Activated CD8-positive, alpha-beta T cell treated with anti-CD3 and anti-CD28 coated beads for 36 hours (primary cell): ENCODE measurements at regions of chr2 and their contacts with region 1.

Region 1: GRCh38 chr2:7450188-7450832 is 533.1 kb downstream of the RNF144A start:
- DNase-seq: peak; percentile 92
- ATAC-seq: peak; percentile 73
- H3K4me3 Mint-ChIP-seq: peak overlapping the region; percentile 48
- H3K27ac Mint-ChIP-seq: peak overlapping the region; percentile 97
- H3K4me1 Mint-ChIP-seq: peaks cover 77% of the 10 kb centered on the region
- H3K27me3 Mint-ChIP-seq: no peaks in the 10 kb centered on the region
- CTCF ChIP-seq: no peak

Region 2: DNA sequence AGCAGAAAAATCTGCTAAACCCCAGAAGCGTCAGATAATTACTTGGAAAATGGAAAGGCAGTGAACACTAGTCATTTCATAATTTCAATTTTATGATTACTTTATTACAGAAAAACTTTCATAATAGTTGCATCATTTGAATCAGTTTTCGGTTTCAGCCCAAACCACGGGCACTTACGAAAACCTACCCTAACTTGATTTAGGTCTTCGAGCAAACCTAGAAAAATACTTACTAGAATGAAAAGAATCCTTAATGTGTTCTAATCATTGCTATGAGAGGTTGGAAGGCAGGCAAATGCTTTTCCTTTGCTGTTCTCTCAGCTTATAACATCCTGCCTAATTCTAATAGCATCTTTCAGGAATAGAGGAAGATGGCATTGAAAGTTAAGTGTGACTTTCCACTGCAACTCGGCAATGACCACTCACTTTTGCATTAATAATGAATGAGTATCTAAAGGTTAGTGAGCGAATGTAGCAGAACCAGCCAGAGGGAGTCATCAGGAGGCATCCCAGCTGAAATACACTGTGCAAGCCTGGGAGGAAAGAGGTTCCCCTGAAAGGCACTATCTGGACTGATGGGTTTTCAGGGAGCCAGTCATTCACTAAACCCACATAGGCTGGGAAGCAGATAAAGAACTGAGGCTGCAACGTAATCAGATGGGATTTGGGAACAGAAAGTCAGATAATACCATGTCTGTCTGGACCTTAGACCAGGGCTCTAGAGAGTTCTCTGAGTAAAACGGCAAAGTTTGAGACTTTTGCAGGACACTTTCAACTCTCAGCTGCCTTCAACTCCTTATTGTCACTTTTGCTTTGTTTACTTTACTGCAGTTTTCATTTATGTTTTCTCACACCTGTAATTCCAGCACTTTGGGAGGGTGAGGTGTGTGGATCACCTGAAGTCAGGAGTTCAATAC is 12.3 kb before region 1 on chr2:
- CTCF ChIA-PET with region 1: interaction called, 6 read pairs
- POLR2A ChIA-PET with region 1: interaction called, 128 read pairs
- intact Hi-C with region 1: loop called (anchors 2 kb)
- DNase-seq: peak; percentile 77
- ATAC-seq: peak; percentile 44
- H3K4me3 Mint-ChIP-seq: peak overlapping the region; percentile 15
- H3K27ac Mint-ChIP-seq: peak overlapping the region; percentile 93
- H3K4me1 Mint-ChIP-seq: peaks cover 88% of the 10 kb centered on the region
- H3K27me3 Mint-ChIP-seq: no peaks in the 10 kb centered on the region
- CTCF ChIP-seq: no peak

Region 3: DNA sequence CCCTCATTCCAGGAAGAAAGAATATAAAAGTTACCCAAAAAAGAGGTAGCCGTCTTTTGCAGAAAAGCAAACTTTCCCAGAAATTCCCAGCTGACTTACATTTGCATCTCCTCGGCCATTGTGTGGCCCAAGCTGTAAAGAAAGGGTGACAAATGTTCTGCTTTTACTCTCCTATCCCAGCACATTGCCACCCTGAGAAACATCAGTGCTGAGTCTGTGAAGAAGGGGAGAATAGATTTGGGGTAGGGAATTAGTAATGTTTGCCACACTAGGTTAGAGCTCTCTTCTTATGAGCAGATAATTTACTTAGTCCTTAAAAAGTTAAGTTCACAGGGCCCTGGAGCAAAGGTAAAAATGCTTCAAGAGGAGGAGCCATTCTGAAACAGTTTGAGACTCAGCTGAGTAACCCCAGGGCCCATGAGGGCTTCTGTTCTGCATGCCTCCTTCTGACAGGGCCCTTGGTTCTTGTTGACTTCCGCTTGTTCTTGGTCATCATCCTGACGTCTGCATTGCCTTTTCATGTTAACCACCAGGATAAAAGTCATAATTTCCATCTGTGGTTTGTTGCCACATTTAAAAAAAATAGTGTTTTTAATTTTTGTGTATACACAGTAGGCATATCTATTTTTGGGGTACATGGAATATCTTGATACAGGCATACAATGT is 17.6 kb after region 1 on chr2:
- CTCF ChIA-PET with region 1: interaction called, 8 read pairs
- POLR2A ChIA-PET with region 1: interaction called, 23 read pairs
- intact Hi-C with region 1: loop called (anchors 2 kb)
- DNase-seq: peak; percentile 83
- ATAC-seq: peak; percentile 96
- H3K4me3 Mint-ChIP-seq: peak overlapping the region; percentile 45
- H3K27ac Mint-ChIP-seq: peak overlapping the region; percentile 98
- H3K4me1 Mint-ChIP-seq: peaks cover 58% of the 10 kb centered on the region
- H3K27me3 Mint-ChIP-seq: no peaks in the 10 kb centered on the region
- CTCF ChIP-seq: no peak

Region 4: DNA sequence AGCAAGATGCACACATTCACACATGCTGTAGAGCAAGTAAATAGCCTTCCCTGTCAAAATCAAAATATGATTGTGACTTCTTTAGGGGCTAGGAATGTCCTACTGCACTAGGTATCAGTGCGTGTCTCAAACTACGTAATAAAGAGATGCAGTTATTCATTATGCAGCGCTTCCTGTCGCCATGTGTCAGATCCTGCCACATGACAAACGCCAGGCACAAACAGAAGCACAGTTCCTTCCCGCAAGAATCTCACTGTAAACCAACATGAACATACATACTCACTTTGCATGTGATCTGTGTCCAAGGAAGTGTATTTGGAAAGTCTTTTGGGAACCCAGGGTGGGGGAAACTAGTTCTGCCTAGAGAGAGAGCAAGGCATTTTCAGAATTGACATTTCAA is 66.8 kb after region 1 on chr2:
- CTCF ChIA-PET with region 1: interaction called, 3 read pairs
- POLR2A ChIA-PET with region 1: interaction called, 4 read pairs
- intact Hi-C with region 1: loop called (anchors 5 kb)
- DNase-seq: peak; percentile 69
- ATAC-seq: peak; percentile 88
- H3K4me3 Mint-ChIP-seq: peak overlapping the region; percentile 30
- H3K27ac Mint-ChIP-seq: peak overlapping the region; percentile 92
- H3K4me1 Mint-ChIP-seq: peaks cover 76% of the 10 kb centered on the region
- H3K27me3 Mint-ChIP-seq: no peaks in the 10 kb centered on the region
- CTCF ChIP-seq: no peak

Region 5: DNA sequence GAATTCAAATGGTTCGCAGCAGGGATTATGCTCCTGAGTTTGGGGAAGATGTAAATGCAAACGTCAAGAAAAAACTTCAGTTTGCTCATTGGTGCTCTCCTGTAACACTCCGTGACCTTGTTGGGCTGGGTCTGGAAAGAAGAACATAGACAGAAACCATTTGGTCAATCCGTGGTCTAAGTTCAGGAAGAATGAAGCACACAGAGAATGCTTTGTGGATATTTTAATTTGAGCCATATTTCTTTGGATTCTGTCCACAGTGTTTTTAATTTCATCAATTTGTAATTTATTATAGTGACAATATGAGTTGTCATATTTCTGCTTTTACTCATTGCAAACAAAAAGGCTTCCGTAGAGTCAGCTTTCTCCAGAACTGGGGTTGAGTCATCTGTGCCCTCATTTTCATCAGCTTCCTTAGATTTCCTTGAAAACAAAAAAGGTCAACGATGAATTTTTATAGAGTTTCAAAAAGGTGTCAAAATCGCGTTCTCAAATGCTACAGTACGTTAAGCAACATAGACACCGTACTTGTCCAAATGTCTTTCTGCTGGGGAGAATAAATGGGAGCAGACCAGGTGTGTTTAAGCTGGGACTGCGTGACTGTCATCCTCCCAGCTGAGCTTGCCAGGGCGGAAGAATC is 73.3 kb after region 1 on chr2:
- CTCF ChIA-PET with region 1: interaction called, 3 read pairs
- POLR2A ChIA-PET with region 1: interaction called, 13 read pairs
- intact Hi-C with region 1: loop called (anchors 5 kb)
- DNase-seq: peak; percentile 32
- ATAC-seq: peak; percentile 54
- H3K4me3 Mint-ChIP-seq: peak overlapping the region; percentile 48
- H3K27ac Mint-ChIP-seq: peak overlapping the region; percentile 87
- H3K4me1 Mint-ChIP-seq: peaks cover 72% of the 10 kb centered on the region
- H3K27me3 Mint-ChIP-seq: no peaks in the 10 kb centered on the region
- CTCF ChIP-seq: no peak

Region 6: DNA sequence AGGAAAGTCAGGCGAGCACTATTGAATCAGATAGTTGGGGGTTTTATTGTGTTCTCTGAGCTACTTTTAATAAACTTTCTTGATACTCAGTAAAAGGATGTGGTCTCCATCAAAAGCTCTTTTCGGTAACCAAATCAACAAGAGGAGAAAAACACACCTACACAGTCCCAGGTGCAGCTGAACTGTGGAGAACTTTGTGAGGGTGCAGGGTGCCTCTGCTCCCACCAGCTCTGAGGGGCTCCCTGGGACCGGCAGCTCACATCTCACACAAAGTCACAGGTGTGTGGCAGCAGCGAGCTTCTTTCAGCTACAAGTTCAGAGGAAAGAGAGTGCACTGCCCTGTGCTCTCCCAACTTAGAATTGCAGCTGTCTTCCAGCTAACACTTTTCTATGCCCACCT is 117.3 kb after region 1 on chr2:
- CTCF ChIA-PET with region 1: interaction called, 10 read pairs
- POLR2A ChIA-PET with region 1: interaction called, 9 read pairs
- intact Hi-C with region 1: no loop called
- DNase-seq: peak; percentile 89
- ATAC-seq: peak; percentile 95
- H3K4me3 Mint-ChIP-seq: peak overlapping the region; percentile 39
- H3K27ac Mint-ChIP-seq: peak overlapping the region; percentile 92
- H3K4me1 Mint-ChIP-seq: peaks cover 72% of the 10 kb centered on the region
- H3K27me3 Mint-ChIP-seq: no peaks in the 10 kb centered on the region
- CTCF ChIP-seq: peak; percentile 30